A549 (cell line): ENCODE measurements at regions of chr18 and their contacts with region 1.

Region 1: GRCh38 chr18:12726774-12727550 is 24.1 kb downstream of the PSMG2 start:
- DNase-seq: peak; percentile 50 to 73
- ATAC-seq: peak; percentile 87
- H3K4me3 ChIP-seq: no peak overlapping the region
- H3K27ac ChIP-seq: peak overlapping the region in 1 of 2 experiments; percentile 74; a peak in 3 of 6 replicates
- H3K4me1 ChIP-seq: no peaks in the 10 kb centered on the region
- CTCF ChIP-seq: peak; percentile 79
- EP300 ChIP-seq: no peak
- POLR2A ChIP-seq: no peak
- RAD21 ChIP-seq: peak; percentile 85 to 86

Region 2: GRCh38 chr18:12711446-12711845 is 15.5 kb before region 1 on chr18:
- CTCF ChIA-PET with region 1: interaction called, 14 read pairs
- POLR2A ChIA-PET with region 1: no interaction called
- DNase-seq: no peak
- ATAC-seq: no peak
- H3K4me3 ChIP-seq: no peak overlapping the region
- H3K27ac ChIP-seq: no peak overlapping the region
- H3K4me1 ChIP-seq: no peaks in the 10 kb centered on the region
- CTCF ChIP-seq: no peak
- EP300 ChIP-seq: no peak
- POLR2A ChIP-seq: no peak
- RAD21 ChIP-seq: no peak

Region 3: DNA sequence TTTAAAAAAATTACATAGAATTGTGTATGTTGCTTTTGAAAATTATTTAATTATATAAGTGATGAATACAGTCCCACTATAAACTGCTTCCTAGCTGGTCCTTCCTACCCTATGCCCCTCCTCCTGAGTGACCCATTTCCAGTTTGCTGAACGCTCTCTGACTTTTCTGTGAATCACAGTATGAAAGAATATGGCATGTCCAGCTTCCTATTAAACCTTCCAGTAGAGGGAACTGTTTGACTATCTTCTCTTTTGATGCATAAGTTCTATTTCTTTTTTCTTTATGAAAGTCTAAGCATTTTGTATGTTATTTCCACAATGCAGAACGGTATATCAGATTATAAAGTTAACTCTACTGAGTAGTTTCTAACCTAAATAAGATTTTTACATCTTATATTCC is 17.1 kb after region 1 on chr18:
- CTCF ChIA-PET with region 1: interaction called, 83 read pairs
- POLR2A ChIA-PET with region 1: interaction called, 3 read pairs
- DNase-seq: peak; percentile 52 to 69
- ATAC-seq: peak; percentile 65 to 76; a peak in 4 of 6 replicates
- H3K4me3 ChIP-seq: no peak overlapping the region
- H3K27ac ChIP-seq: no peak overlapping the region
- H3K4me1 ChIP-seq: peaks cover 36% of the 10 kb centered on the region
- CTCF ChIP-seq: peak; percentile 62
- EP300 ChIP-seq: no peak
- POLR2A ChIP-seq: no peak
- RAD21 ChIP-seq: peak; percentile 70 to 81

Region 4: GRCh38 chr18:12890506-12890905 is 163.5 kb after region 1 on chr18:
- CTCF ChIA-PET with region 1: interaction called, 32 read pairs
- POLR2A ChIA-PET with region 1: no interaction called
- DNase-seq: peak in 1 of 2 experiments; percentile 22
- ATAC-seq: peak; percentile 83 to 85; a peak in 5 of 6 replicates
- H3K4me3 ChIP-seq: no peak overlapping the region
- H3K27ac ChIP-seq: no peak overlapping the region
- H3K4me1 ChIP-seq: 0 out of 3 replicates have a peak, but pooled peaks cover 3% of the 10 kb centered on the region
- CTCF ChIP-seq: no peak
- EP300 ChIP-seq: no peak
- POLR2A ChIP-seq: no peak
- RAD21 ChIP-seq: 0 out of 5 replicates have a peak, but pooled peaks of 1 of the 2 experiments have one; percentile 16

Region 5: DNA sequence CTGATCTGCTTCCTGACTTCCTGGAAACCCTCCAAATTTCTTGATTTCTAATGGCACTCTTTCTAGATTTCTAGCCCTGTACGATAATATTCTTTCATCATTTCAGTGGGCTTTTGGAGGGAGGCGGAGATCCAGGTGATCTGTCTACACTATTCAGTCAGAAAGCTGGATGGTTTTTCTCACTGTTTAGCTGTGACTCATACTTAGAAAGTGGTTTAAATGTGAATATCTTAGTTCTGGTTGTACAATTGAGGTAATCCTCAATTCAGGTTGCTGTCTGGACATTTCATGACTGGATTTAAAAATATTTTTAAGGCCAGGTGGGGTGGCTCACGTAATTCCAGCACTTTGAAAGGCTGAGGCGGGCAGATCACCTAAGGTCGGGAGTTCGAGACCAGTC is 241.7 kb after region 1 on chr18:
- CTCF ChIA-PET with region 1: no interaction called
- POLR2A ChIA-PET with region 1: interaction called, 12 read pairs
- DNase-seq: no peak
- ATAC-seq: no peak
- H3K4me3 ChIP-seq: no peak overlapping the region
- H3K27ac ChIP-seq: no peak overlapping the region
- H3K4me1 ChIP-seq: no peaks in the 10 kb centered on the region
- CTCF ChIP-seq: no peak
- EP300 ChIP-seq: no peak
- POLR2A ChIP-seq: no peak
- RAD21 ChIP-seq: no peak

Region 6: DNA sequence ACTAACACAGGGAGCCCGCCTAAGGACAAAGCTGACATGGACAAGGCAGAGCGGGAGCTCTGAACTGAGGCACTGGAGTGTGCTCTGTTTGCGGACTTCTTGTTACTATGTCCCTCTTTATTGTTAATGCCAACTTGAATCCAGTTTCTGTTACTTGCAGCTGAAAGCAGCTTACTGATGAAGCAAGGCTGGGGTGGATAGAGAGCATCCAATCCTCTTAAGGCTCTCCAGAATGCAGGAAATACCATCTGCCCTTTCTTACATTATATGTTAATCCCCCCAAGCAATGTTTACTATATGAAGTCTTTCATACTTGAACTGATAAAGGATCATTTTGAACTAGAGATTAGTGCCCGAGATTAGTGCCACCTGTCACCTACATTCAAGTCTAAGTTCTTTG is 990.0 kb after region 1 on chr18:
- CTCF ChIA-PET with region 1: no interaction called
- POLR2A ChIA-PET with region 1: no interaction called
- DNase-seq: no peak
- ATAC-seq: no peak
- H3K4me3 ChIP-seq: no peak overlapping the region
- H3K27ac ChIP-seq: no peak overlapping the region
- H3K4me1 ChIP-seq: no peaks in the 10 kb centered on the region
- CTCF ChIP-seq: no peak
- EP300 ChIP-seq: no peak
- POLR2A ChIP-seq: no peak
- RAD21 ChIP-seq: no peak